ENCODE measurements at regions of chr9 and their contacts with region 1.

Region 1: GRCh38 chr9:19456996-19457692 is 48.3 kb downstream of the ACER2 start:
- DNase-seq: peak; percentile 56
- H3K4me3 ChIP-seq: no peak overlapping the region
- H3K27ac ChIP-seq: no peak overlapping the region
- H3K4me1 ChIP-seq: no peaks in the 10 kb centered on the region
- H3K27me3 ChIP-seq: no peaks in the 10 kb centered on the region
- CTCF ChIP-seq: peak; percentile 89 to 95 (median 90)
- POLR2A ChIP-seq: no peak

Region 2: DNA sequence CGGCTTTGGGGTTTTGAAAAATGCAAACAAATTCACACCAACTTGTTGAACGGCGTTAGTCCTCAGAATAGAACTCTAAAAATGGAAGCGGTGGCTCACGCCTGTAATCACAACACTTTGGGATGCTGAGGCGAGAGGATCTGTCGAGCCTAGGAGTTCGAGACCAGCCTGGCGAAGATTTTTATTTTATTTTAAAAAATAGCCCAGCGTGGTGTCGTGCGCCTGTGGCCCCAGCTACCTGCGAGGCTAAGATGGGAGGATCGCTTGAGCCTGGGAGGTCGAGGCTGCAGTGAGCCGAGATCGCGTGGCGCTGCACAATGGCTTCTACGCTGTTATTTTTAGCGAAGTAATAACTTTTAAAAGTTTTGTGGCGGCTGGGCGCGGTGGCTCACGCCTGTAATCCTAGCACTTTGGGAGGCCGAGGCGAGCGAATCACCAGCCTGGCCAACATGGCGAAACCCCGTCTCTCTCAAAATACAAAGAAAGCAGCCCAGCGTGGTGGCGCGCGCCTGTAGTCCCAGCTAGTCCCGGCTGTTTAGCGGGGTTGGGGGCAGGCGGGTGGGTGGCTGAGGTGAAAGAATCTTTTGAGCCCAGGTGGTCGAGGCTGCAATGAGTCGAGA is 329.2 kb before region 1 on chr9:
- intact Hi-C with region 1: loop called (anchors 10 kb)
- DNase-seq: no peak
- H3K4me3 ChIP-seq: peak overlapping the region; percentile 66 to 74
- H3K27ac ChIP-seq: peak overlapping the region; percentile 92 to 96
- H3K4me1 ChIP-seq: no peaks in the 10 kb centered on the region
- H3K27me3 ChIP-seq: no peaks in the 10 kb centered on the region
- CTCF ChIP-seq: no peak
- POLR2A ChIP-seq: no peak

Region 3: GRCh38 chr9:19174127-19174912 is 282.8 kb before region 1 on chr9:
- intact Hi-C with region 1: loop called (anchors 10 kb)
- DNase-seq: peak; percentile 7
- H3K4me3 ChIP-seq: no peak overlapping the region
- H3K27ac ChIP-seq: no peak overlapping the region
- H3K4me1 ChIP-seq: no peaks in the 10 kb centered on the region
- H3K27me3 ChIP-seq: no peaks in the 10 kb centered on the region
- CTCF ChIP-seq: peak in 3 of 4 experiments; percentile 13 to 44 (median 43)
- POLR2A ChIP-seq: no peak

Region 4: DNA sequence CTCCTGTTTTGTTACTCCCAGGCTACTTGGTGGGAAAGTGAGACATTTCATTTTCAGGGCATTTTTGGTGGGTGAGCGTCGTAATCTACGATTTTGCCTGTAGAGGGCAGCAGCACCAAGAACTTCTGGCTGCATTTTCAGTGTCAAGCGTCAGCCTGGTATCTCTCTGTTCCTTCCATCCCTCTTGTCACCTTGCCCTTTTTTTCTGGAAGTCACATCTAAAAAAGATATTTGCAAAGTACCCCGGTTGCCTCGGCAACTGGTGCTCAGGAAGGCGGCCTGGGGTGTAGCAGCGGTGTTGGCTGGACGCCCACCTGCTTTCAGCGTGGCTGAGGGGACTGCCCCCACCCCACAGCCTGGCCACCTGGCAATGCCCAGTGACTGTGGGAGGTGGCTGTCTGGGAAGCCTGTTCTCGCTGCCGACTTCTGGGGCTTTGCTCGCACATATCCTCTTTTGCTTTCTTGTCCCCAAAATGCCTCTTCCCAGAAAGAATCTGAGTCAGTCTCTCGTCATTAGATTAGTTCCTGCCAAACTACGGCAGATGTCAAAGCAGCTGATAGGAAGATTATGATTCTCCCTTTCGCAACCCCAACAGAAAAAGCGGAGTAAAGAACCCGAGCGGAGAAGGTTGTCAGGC is 36.1 kb after region 1 on chr9:
- intact Hi-C with region 1: no loop called
- DNase-seq: peak; percentile 16
- H3K4me3 ChIP-seq: no peak overlapping the region
- H3K27ac ChIP-seq: no peak overlapping the region
- H3K4me1 ChIP-seq: no peaks in the 10 kb centered on the region
- H3K27me3 ChIP-seq: no peaks in the 10 kb centered on the region
- CTCF ChIP-seq: peak in 3 of 4 experiments; percentile 51 to 59 (median 53)
- POLR2A ChIP-seq: no peak